Heart right ventricle (tissue), 16 donors: ENCODE measurements at regions of chr19 and their contacts with region 1.

Region 1: GRCh38 chr19:54448774-54449700 is at the start of gene LENG8:
- DNase-seq: peak; percentile 97 to 98
- ATAC-seq: peak; percentile 96 to 99 (median 98)
- H3K4me3 ChIP-seq: peak within 1 kb of the TSS; percentile 63 to 99 (median 84)
- H3K27ac ChIP-seq: peak within 1 kb of the TSS; percentile 84 to 99 (median 96)
- H3K4me1 ChIP-seq: peaks cover 13 to 59% (median 45%) of the 10 kb centered on the region in 9 donors
- H3K27me3 ChIP-seq: no peaks in the 10 kb centered on the region
- CTCF ChIP-seq: peak in 1 of 9 donors; percentile 5
- total RNA-seq, gene LENG8: 45.5 to 76.2 (median 56.8) TPM

Region 2: DNA sequence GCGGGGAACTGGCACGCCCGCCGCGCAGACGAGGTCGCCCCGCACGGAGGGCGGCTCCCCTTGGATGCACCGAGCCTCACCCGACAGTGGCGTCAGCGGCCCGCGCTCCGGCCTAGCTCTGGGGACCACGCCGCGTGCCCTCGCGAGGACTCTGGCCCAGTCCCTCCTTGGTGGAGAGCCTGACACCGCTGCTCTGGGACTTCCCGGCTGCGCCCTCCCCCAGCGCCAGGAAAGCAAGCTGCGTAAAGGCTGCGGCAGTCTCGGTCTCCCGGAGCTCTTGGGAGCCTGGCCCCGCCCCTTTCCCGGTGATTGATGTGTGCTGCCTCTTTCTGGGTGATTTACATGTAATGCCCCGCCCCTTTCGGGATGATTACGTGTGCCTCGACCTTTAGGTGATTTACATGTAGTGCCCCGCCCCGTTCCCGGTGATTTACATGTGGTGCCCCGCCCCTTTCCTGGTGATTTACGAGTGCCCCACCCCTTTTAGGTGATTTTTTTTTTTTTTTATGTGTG is 14.6 kb after region 1 on chr19 and contains the start of gene LENG9:
- intact Hi-C with region 1: loop called in 3 of 10 experiments (anchors 1 to 2 kb)
- DNase-seq: peak; percentile 95 to 99
- ATAC-seq: peak; percentile 72 to 89 (median 82)
- H3K4me3 ChIP-seq: peak within 1 kb of the TSS; percentile 45 to 75 (median 68)
- H3K27ac ChIP-seq: peak within 1 kb of the TSS; percentile 96 to 100 (median 98)
- H3K4me1 ChIP-seq: peaks cover 11 to 54% (median 45%) of the 10 kb centered on the region in 9 donors
- H3K27me3 ChIP-seq: peaks cover 0 to 25% (median 0%) of the 10 kb centered on the region in 7 donors
- CTCF ChIP-seq: no peak
- total RNA-seq, gene LENG9: 1.0 to 4.2 (median 1.5) TPM

Region 3: GRCh38 chr19:54517483-54517882 is 68.4 kb after region 1 on chr19:
- intact Hi-C with region 1: no loop called
- DNase-seq: peak; percentile 46 to 48
- ATAC-seq: peak in 4 of 8 donors; percentile 41 to 55 (median 49)
- H3K4me3 ChIP-seq: no peak overlapping the region
- H3K27ac ChIP-seq: no peak overlapping the region
- H3K4me1 ChIP-seq: peaks cover 0 to 12% (median 0%) of the 10 kb centered on the region in 9 donors
- H3K27me3 ChIP-seq: peaks cover 0 to 74% (median 13%) of the 10 kb centered on the region in 7 donors
- CTCF ChIP-seq: no peak